Transverse colon (tissue), 4 donors: ENCODE measurements at regions of chr7 and their contacts with region 1.

Region 1: GRCh38 chr7:158695726-158696452 is 8.7 kb downstream of the NCAPG2 start:
- DNase-seq: peak; percentile 74
- H3K4me3 ChIP-seq: no peak overlapping the region
- H3K27ac ChIP-seq: peak overlapping the region in 3 of 4 donors; percentile 29 to 53 (median 51)
- H3K4me1 ChIP-seq: peaks cover 0 to 7% (median 3%) of the 10 kb centered on the region in 4 donors
- H3K27me3 ChIP-seq: no peaks in the 10 kb centered on the region
- CTCF ChIP-seq: peak; percentile 53 to 85 (median 62)
- EP300 ChIP-seq: no peak
- POLR2A ChIP-seq: no peak

Region 2: GRCh38 chr7:157937406-157937805 is 758.5 kb before region 1 on chr7:
- in situ Hi-C with region 1: no loop called
- intact Hi-C with region 1: no loop called
- DNase-seq: no peak
- H3K4me3 ChIP-seq: no peak overlapping the region
- H3K27ac ChIP-seq: no peak overlapping the region
- H3K4me1 ChIP-seq: no peaks in the 10 kb centered on the region
- H3K27me3 ChIP-seq: no peaks in the 10 kb centered on the region
- CTCF ChIP-seq: no peak
- EP300 ChIP-seq: no peak
- POLR2A ChIP-seq: no peak

Region 3: GRCh38 chr7:158602905-158603772 is 92.8 kb before region 1 on chr7:
- in situ Hi-C with region 1: no loop called
- intact Hi-C with region 1: no loop called
- DNase-seq: no peak
- H3K4me3 ChIP-seq: no peak overlapping the region
- H3K27ac ChIP-seq: no peak overlapping the region
- H3K4me1 ChIP-seq: no peaks in the 10 kb centered on the region
- H3K27me3 ChIP-seq: no peaks in the 10 kb centered on the region
- CTCF ChIP-seq: no peak
- EP300 ChIP-seq: no peak
- POLR2A ChIP-seq: no peak

Region 4: DNA sequence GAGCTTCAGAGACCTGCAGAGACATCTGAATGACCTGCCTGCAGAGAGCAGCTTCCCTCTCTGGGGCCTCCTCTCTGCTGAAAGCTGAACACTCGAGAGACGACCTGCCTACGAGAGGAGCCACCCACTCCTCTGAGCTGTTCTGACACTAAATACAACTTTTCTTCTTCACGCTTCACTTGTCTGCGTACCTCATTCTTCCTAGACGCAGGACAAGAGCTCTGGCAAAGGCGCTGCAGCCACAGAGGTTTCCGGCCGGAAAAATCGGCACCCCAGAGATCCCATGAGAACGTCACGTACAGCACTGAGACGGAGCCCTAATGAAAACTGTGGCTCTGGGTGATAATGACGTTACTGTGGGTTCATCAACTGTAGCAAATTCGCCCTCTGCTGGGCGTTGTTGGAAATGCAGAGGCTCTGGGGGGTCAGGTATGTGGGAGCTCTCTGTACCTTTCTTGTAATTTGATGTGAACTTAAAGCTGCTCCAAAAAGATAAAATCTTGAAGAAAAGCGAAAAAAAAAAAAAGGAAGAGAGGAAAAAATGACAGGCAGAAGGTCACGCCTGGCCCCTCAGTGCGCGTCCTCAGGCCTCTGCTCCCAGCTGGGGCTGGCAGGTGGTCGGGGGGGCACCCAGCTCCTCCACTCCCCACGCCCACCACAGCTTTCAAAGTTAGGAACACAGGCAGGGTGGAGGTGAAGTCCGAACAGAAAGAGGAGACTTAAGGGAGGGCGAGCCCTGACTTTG is 281.1 kb after region 1 on chr7:
- in situ Hi-C with region 1: loop called in 3 of 4 experiments (anchors 5 to 10 kb)
- intact Hi-C with region 1: loop called (anchors 10 kb)
- DNase-seq: peak; percentile 90
- H3K4me3 ChIP-seq: peak overlapping the region in 3 of 4 donors; percentile 15 to 38 (median 17)
- H3K27ac ChIP-seq: peak overlapping the region; percentile 3 to 68 (median 24)
- H3K4me1 ChIP-seq: peaks cover 6 to 28% (median 12%) of the 10 kb centered on the region in 4 donors
- H3K27me3 ChIP-seq: no peaks in the 10 kb centered on the region
- CTCF ChIP-seq: peak; percentile 93 to 97 (median 94)
- EP300 ChIP-seq: no peak
- POLR2A ChIP-seq: no peak

Region 5: GRCh38 chr7:159007364-159007995 is 311.6 kb after region 1 on chr7:
- in situ Hi-C with region 1: no loop called
- intact Hi-C with region 1: no loop called
- DNase-seq: no peak
- H3K4me3 ChIP-seq: no peak overlapping the region
- H3K27ac ChIP-seq: no peak overlapping the region
- H3K4me1 ChIP-seq: peaks cover 0 to 6% (median 2%) of the 10 kb centered on the region in 4 donors
- H3K27me3 ChIP-seq: no peaks in the 10 kb centered on the region
- CTCF ChIP-seq: no peak
- EP300 ChIP-seq: no peak
- POLR2A ChIP-seq: no peak

Region 6: GRCh38 chr7:159167139-159167538 is 471.2 kb after region 1 on chr7:
- in situ Hi-C with region 1: no loop called
- intact Hi-C with region 1: no loop called
- DNase-seq: no peak
- H3K4me3 ChIP-seq: no peak overlapping the region
- H3K27ac ChIP-seq: no peak overlapping the region
- H3K4me1 ChIP-seq: no peaks in the 10 kb centered on the region
- H3K27me3 ChIP-seq: no peaks in the 10 kb centered on the region
- CTCF ChIP-seq: no peak
- EP300 ChIP-seq: no peak
- POLR2A ChIP-seq: no peak